Endothelial cell of umbilical vein (primary cell): ENCODE measurements at regions of chr18 and their contacts with region 1.

Region 1: DNA sequence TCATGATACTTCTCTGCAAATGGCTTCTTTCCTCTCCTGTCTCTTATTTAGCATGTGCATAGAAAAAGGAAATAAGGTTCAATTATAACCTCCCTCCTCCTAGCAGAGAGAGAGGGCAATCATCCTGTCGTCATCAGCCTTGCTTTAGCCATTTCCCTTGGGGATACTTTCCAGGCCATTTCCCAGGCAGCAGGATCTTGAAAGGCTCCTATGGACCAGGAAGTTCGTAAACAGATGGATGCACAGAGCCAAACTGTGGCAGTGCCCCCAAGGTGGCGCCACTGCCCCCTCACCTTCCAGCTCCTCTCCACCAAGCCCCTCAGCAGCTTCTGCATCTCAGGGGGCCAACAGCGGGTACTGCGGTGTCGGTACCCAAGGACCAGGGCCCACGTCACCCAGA is 157.4 kb downstream of the DTNA start:
- DNase-seq: peak; percentile 10
- H3K4me3 ChIP-seq: no peak overlapping the region
- H3K27ac ChIP-seq: no peak overlapping the region
- H3K4me1 ChIP-seq: no peaks in the 10 kb centered on the region
- H3K27me3 ChIP-seq: no peaks in the 10 kb centered on the region
- CTCF ChIP-seq: peak; percentile 15 to 34
- POLR2A ChIP-seq: no peak

Region 2: GRCh38 chr18:33960417-33960816 is 907.1 kb before region 1 on chr18:
- CTCF ChIA-PET with region 1: no interaction called
- POLR2A ChIA-PET with region 1: no interaction called
- dilution Hi-C with region 1: no loop called
- intact Hi-C with region 1: no loop called
- DNase-seq: no peak
- H3K4me3 ChIP-seq: no peak overlapping the region
- H3K27ac ChIP-seq: no peak overlapping the region
- H3K4me1 ChIP-seq: no peaks in the 10 kb centered on the region
- H3K27me3 ChIP-seq: no peaks in the 10 kb centered on the region
- CTCF ChIP-seq: no peak
- POLR2A ChIP-seq: no peak

Region 3: DNA sequence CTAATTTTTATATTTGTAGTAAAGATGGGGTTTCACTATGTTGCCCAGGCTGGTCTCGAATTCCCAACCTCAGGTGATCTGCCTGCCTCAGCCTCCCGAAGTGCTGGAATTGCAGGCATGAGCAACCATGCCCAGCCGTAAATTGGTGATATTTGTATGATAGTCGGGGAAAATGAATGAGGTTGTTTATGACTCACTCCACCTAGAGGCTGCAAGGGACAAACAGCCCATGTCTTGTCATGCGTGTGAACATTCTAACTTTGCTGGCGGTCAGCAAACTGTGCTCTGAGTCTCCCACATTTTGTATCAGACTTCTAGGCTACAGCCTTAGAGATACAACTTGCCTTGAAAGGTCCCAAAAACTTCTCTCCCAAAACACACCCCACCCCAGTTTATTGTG is 290.9 kb before region 1 on chr18:
- CTCF ChIA-PET with region 1: no interaction called
- POLR2A ChIA-PET with region 1: no interaction called
- dilution Hi-C with region 1: no loop called
- intact Hi-C with region 1: no loop called
- DNase-seq: no peak
- H3K4me3 ChIP-seq: no peak overlapping the region
- H3K27ac ChIP-seq: no peak overlapping the region
- H3K4me1 ChIP-seq: no peaks in the 10 kb centered on the region
- H3K27me3 ChIP-seq: no peaks in the 10 kb centered on the region
- CTCF ChIP-seq: no peak
- POLR2A ChIP-seq: no peak

Region 4: GRCh38 chr18:34880882-34881834 is 13.6 kb after region 1 on chr18:
- CTCF ChIA-PET with region 1: interaction called, 11 read pairs
- POLR2A ChIA-PET with region 1: no interaction called
- dilution Hi-C with region 1: no loop called
- intact Hi-C with region 1: no loop called
- DNase-seq: peak; percentile 20
- H3K4me3 ChIP-seq: no peak overlapping the region
- H3K27ac ChIP-seq: no peak overlapping the region
- H3K4me1 ChIP-seq: no peaks in the 10 kb centered on the region
- H3K27me3 ChIP-seq: no peaks in the 10 kb centered on the region
- CTCF ChIP-seq: no peak
- POLR2A ChIP-seq: no peak